Activated CD4-positive, alpha-beta T cell treated with anti-CD3 and anti-CD28 coated beads, Interleukin-2, amount 10 ng/mL, durations not matched to agents 24 days and 14 days (primary cell): ENCODE measurements at regions of chr1 and their contacts with region 1.

Region 1: DNA sequence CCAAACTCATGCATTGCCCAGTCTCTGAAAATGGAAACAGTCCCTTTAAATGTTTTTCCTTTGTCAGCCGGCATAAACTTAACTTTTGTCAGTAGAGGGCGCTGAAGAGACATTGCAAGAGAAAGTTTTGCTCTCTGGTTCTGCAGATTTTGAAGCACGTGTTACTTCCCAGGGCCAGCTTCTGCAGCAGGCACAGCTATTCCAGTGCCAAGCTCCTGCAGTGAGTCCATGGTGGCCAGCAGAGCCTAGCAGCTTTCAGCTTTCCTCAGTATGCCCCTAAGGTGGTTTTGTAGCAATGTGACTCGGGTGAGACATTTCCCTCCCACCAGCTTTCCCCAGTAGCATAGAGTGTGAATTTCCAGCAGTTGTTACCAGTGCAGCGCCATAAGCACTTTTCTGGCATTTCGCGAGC is 2.6 kb upstream of the IFI44L start:
- DNase-seq: peak; percentile 90
- H3K4me3 Mint-ChIP-seq: peak overlapping the region; percentile 43
- H3K27ac Mint-ChIP-seq: peak overlapping the region; percentile 19
- H3K4me1 Mint-ChIP-seq: peaks cover 34% of the 10 kb centered on the region
- H3K27me3 Mint-ChIP-seq: peaks cover 9% of the 10 kb centered on the region

Region 2: GRCh38 chr1:78640462-78640861 is 22.8 kb after region 1 on chr1:
- intact Hi-C with region 1: loop called (anchors 2 kb)
- DNase-seq: no peak
- H3K4me3 Mint-ChIP-seq: no peak overlapping the region
- H3K27ac Mint-ChIP-seq: no peak overlapping the region
- H3K4me1 Mint-ChIP-seq: peaks cover 48% of the 10 kb centered on the region
- H3K27me3 Mint-ChIP-seq: no peaks in the 10 kb centered on the region

Region 3: DNA sequence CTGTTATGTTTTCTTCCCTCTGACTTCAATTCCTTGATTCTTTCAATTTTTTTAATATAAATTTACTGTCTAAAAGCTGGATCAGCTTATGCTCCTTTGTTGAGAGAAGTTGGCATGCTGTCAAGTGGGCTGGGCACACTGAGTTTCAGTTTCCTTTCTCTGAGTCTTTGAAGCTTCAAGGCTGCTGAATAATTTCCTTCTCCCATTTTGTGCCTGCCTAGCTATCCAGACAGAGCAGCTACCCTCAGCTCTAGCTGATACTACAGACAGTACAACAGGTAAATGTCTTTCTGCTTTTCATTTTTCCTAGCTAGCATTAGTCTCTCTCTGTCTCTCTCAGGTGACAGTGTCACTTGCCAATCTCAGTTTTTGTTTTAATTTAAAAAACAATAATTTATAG is 32.0 kb after region 1 on chr1 and contains the start of gene IFI44:
- intact Hi-C with region 1: loop called (anchors 1 kb)
- DNase-seq: peak; percentile 91
- H3K4me3 Mint-ChIP-seq: peak within 1 kb of the TSS; percentile 95
- H3K27ac Mint-ChIP-seq: peak within 1 kb of the TSS; percentile 92
- H3K4me1 Mint-ChIP-seq: peaks cover 55% of the 10 kb centered on the region
- H3K27me3 Mint-ChIP-seq: no peaks in the 10 kb centered on the region
- total RNA-seq, gene IFI44: 20.4 and 27.6 TPM in 2 replicates

Region 4: GRCh38 chr1:78664763-78665162 is 47.1 kb after region 1 on chr1:
- intact Hi-C with region 1: no loop called
- DNase-seq: peak; percentile 40
- H3K4me3 Mint-ChIP-seq: no peak overlapping the region
- H3K27ac Mint-ChIP-seq: no peak overlapping the region
- H3K4me1 Mint-ChIP-seq: peaks cover 10% of the 10 kb centered on the region
- H3K27me3 Mint-ChIP-seq: no peaks in the 10 kb centered on the region

Region 5: DNA sequence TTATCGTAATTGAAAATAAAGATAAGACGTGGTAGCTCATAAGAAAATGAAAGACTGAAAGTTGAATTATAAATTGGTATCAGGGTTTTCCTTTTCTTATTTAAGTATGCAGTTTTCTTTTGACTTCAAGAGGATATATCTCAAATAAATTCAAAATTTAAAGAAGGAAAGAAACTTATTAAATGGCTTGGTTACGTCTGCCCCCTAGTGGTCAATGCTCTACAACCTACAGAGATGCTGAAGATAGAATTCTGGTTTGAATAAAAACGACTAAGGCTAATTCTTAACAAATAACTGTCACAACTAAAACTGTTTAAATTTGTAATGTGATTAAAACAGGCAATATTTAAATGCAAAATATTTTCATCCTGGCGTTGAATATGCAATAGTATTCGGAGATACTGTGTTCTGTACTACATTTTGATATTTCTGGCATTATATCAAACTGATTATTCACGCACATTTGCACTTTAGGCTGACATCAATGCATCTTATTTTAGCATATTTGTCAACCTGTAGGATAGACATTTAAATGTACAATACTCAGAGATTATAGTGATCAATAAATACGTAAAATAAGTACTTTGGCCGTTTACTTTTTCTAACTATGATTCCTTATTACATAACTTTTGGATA is 58.8 kb after region 1 on chr1:
- intact Hi-C with region 1: loop called (anchors 1 kb)
- DNase-seq: peak; percentile 86
- H3K4me3 Mint-ChIP-seq: no peak overlapping the region
- H3K27ac Mint-ChIP-seq: no peak overlapping the region
- H3K4me1 Mint-ChIP-seq: peaks cover 22% of the 10 kb centered on the region
- H3K27me3 Mint-ChIP-seq: peaks cover 3% of the 10 kb centered on the region

Region 6: GRCh38 chr1:78839704-78840277 is 222.2 kb after region 1 on chr1:
- intact Hi-C with region 1: loop called (anchors 10 kb)
- DNase-seq: peak; percentile 80
- H3K4me3 Mint-ChIP-seq: no peak overlapping the region
- H3K27ac Mint-ChIP-seq: no peak overlapping the region
- H3K4me1 Mint-ChIP-seq: peaks cover 7% of the 10 kb centered on the region
- H3K27me3 Mint-ChIP-seq: peaks cover 2% of the 10 kb centered on the region

Region 7: DNA sequence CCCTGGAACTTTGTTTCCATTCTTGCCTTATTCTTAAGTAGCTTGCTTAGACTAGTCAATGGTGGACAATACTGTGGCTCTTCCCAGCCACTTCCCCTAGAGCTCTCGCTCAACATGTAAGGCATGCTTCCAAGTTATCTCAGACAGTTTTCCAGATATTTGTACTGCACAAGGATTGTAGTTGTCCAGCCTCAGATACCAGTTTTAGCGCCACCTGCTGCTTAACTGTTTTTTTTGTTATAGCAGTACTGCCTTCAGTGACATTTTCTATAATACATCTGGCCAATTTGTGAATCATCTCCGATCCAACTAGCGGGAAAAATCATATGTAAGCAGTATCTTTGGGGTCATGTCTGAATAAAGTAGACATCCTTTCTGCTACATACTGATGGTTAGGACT is 735.6 kb after region 1 on chr1:
- intact Hi-C with region 1: no loop called
- DNase-seq: peak; percentile 56
- H3K4me3 Mint-ChIP-seq: no peak overlapping the region
- H3K27ac Mint-ChIP-seq: no peak overlapping the region
- H3K4me1 Mint-ChIP-seq: no peaks in the 10 kb centered on the region
- H3K27me3 Mint-ChIP-seq: no peaks in the 10 kb centered on the region